HAP-1 (cell line): ENCODE measurements at regions of chr14 and their contacts with region 1.

Region 1: GRCh38 chr14:102509744-102510615 is at the start of gene ANKRD9:
- DNase-seq: peak; percentile 93 to 96
- H3K4me3 ChIP-seq: peak within 1 kb of the TSS; percentile 54
- H3K4me1 ChIP-seq: peaks cover 7% of the 10 kb centered on the region
- H3K27me3 ChIP-seq: no peaks in the 10 kb centered on the region

Region 2: GRCh38 chr14:102235275-102235897 is 274.6 kb before region 1 on chr14:
- in situ Hi-C with region 1: loop called (anchors 10 kb)
- DNase-seq: peak; percentile 76 to 91
- H3K4me3 ChIP-seq: no peak overlapping the region
- H3K4me1 ChIP-seq: no peaks in the 10 kb centered on the region
- H3K27me3 ChIP-seq: no peaks in the 10 kb centered on the region

Region 3: DNA sequence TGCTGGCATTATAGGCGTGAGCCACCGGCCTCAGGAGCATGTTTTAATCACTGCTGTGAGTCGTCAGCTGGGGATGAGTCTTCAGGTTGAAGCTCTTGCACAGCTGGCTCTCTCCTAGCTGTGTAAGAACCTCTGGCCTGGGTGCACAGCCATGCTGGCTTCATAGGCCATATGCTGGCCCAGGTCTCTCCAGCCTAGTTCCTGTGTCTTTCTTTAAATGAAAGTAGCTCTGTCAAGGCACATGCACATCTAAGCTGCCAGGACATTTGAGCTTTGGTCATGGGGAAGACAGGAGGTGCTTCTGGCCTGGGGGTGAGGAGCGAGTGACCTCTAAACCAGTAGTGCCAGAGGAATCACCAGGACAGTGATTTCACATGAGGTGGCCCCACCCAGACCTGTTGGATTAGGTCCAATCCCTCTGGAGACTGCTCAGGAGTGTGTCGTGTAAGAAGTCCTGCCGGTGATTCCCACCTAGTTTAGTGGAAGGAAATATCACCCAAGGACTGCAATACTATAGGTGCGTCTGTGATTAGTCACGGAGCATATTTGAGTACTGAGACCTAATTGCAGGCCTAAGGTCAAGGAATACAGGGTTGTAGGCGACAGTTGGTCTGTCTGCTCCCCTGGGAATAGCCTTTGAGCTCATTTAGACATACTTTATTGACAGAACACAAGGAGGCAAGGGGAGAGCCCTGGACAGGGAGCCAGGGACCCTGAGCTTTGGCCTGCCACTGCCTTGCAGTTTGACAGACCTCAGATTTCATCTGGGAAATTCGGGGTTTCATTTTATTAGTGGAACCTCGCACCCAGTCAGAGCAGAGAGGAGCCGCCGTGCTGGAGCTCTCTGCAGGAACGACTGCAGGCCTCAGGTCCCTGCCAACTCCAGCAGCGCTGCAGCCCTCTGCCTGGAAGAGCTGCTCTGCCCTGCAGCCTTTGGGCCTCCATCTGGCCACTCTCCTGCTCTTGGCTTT is 67.5 kb before region 1 on chr14:
- in situ Hi-C with region 1: loop called (anchors 5 kb)
- DNase-seq: no peak
- H3K4me3 ChIP-seq: no peak overlapping the region
- H3K4me1 ChIP-seq: peaks cover 10% of the 10 kb centered on the region
- H3K27me3 ChIP-seq: no peaks in the 10 kb centered on the region

Region 4: GRCh38 chr14:102659797-102660196 is 149.8 kb after region 1 on chr14:
- in situ Hi-C with region 1: no loop called
- DNase-seq: no peak
- H3K4me3 ChIP-seq: no peak overlapping the region
- H3K4me1 ChIP-seq: peaks cover 42% of the 10 kb centered on the region
- H3K27me3 ChIP-seq: no peaks in the 10 kb centered on the region